Body of pancreas (tissue), 4 donors: ENCODE measurements at regions of chr2 and their contacts with region 1.

Region 1: GRCh38 chr2:95115418-95115817 is 6.2 kb downstream of the MRPS5 start:
- DNase-seq: peak; percentile 73 to 85 (median 78)
- ATAC-seq: peak; percentile 82
- H3K4me3 ChIP-seq: no peak overlapping the region
- H3K27ac ChIP-seq: no peak overlapping the region
- H3K4me1 ChIP-seq: peaks cover 21% of the 10 kb centered on the region
- H3K27me3 ChIP-seq: no peaks in the 10 kb centered on the region
- CTCF ChIP-seq: peak; percentile 42 to 81 (median 70)
- POLR2A ChIP-seq: no peak

Region 2: GRCh38 chr2:95012881-95013550 is 102.4 kb before region 1 on chr2:
- intact Hi-C with region 1: loop called (anchors 10 kb)
- DNase-seq: no peak
- ATAC-seq: no peak
- H3K4me3 ChIP-seq: no peak overlapping the region
- H3K27ac ChIP-seq: no peak overlapping the region
- H3K4me1 ChIP-seq: no peaks in the 10 kb centered on the region
- H3K27me3 ChIP-seq: no peaks in the 10 kb centered on the region
- CTCF ChIP-seq: no peak
- POLR2A ChIP-seq: no peak

Region 3: GRCh38 chr2:95379371-95379831 is 264.0 kb after region 1 on chr2:
- intact Hi-C with region 1: no loop called
- DNase-seq: no peak
- ATAC-seq: no peak
- H3K4me3 ChIP-seq: no peak overlapping the region
- H3K27ac ChIP-seq: no peak overlapping the region
- H3K4me1 ChIP-seq: no peaks in the 10 kb centered on the region
- H3K27me3 ChIP-seq: no peaks in the 10 kb centered on the region
- CTCF ChIP-seq: no peak
- POLR2A ChIP-seq: no peak